Activated CD8-positive, alpha-beta memory T cell treated with anti-CD3 and anti-CD28 coated beads, Interleukin-2, amount 10 ng/mL, durations not matched to agents 7 days and 5 days (primary cell): ENCODE measurements at regions of chr2 and their contacts with region 1.

Region 1: GRCh38 chr2:38602732-38603401 is at the start of gene HNRNPLL:
- DNase-seq: peak; percentile 97
- ATAC-seq: peak; percentile 82
- H3K4me3 Mint-ChIP-seq: peak within 1 kb of the TSS; percentile 99
- H3K27ac Mint-ChIP-seq: peak within 1 kb of the TSS; percentile 95
- H3K4me1 Mint-ChIP-seq: peaks cover 49% of the 10 kb centered on the region
- H3K27me3 Mint-ChIP-seq: no peaks in the 10 kb centered on the region
- total RNA-seq, gene HNRNPLL: 88.8 to 106 TPM

Region 2: DNA sequence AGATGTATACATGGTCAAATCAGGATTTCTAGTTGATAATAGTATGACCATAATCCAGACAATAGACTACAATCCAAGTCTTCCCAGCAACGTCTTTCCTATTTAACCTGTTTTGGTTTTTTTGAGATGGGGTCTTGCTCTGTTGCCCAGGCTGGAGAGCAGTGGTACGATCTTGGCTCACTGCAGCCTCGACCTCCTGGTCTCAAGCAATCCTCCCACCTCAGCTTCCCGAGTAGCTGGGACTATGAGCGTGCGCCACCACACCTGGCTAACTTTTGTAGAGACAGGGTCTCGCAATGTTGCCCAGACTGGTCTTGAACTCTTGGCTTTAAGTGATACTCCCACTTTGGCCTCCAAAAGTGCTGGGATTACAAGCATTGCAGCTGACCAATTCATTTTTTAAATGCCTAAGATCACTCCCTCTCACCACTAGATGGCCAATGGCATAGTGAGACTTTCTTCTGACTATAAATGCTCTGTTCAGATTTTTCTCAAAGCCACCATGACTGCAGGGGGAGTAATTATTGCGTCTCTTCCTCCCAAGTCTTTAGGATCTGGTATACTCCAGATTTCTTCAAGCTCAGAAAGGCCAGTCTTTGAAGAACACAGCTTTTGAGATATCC is 47.8 kb before region 1 on chr2:
- CTCF ChIA-PET with region 1: no interaction called
- DNase-seq: no peak
- ATAC-seq: peak; percentile 42
- H3K4me3 Mint-ChIP-seq: no peak overlapping the region
- H3K27ac Mint-ChIP-seq: no peak overlapping the region
- H3K4me1 Mint-ChIP-seq: peaks cover 3% of the 10 kb centered on the region
- H3K27me3 Mint-ChIP-seq: no peaks in the 10 kb centered on the region

Region 3: DNA sequence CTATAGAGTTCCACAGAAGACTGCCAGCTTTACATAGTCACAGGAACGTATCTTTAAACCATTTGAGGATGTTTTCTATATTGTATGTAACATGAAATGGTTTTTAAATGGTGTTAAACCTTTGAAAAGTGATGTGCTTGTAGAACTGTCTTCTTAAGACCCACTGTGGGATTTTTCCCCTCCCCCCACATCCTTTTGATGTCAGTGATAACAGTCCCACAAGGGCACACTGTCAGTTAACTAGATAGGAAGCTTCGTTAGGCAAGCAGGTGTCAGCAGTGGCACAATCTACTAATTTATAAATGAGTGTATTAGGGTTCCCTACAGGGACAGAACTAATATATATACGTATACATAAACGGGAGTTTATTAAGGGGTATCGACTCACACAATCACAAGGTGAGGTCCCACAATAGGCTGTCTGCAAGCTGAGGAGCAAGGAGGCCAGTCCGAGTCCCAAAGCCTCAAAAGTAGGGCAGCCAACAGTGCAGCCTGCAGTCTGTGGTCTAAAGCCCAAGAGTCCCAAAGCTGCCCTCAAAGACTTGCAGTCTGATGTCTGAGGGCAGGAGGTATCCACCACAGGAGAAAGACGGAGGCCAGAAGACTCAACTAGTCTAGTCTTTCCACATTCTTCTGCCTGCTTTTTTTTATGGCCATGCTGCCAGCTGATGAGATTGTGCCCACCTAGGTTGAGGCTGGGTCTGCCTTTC is 23.6 kb after region 1 on chr2:
- CTCF ChIA-PET with region 1: interaction called, 23 read pairs
- DNase-seq: peak; percentile 78
- ATAC-seq: peak; percentile 82
- H3K4me3 Mint-ChIP-seq: no peak overlapping the region
- H3K27ac Mint-ChIP-seq: peak overlapping the region; percentile 30
- H3K4me1 Mint-ChIP-seq: peaks cover 27% of the 10 kb centered on the region
- H3K27me3 Mint-ChIP-seq: no peaks in the 10 kb centered on the region

Region 4: GRCh38 chr2:38665854-38666555 is 63.1 kb after region 1 on chr2 and contains the start of gene GALM:
- CTCF ChIA-PET with region 1: interaction called, 166 read pairs
- DNase-seq: peak; percentile 80
- ATAC-seq: peak; percentile 41
- H3K4me3 Mint-ChIP-seq: peak within 1 kb of the TSS; percentile 74
- H3K27ac Mint-ChIP-seq: peak within 1 kb of the TSS; percentile 96
- H3K4me1 Mint-ChIP-seq: peaks cover 64% of the 10 kb centered on the region
- H3K27me3 Mint-ChIP-seq: no peaks in the 10 kb centered on the region
- total RNA-seq, gene GALM: 67.1 to 86.0 TPM

Region 5: GRCh38 chr2:38685116-38685735 is 82.4 kb after region 1 on chr2:
- CTCF ChIA-PET with region 1: interaction called, 57 read pairs
- DNase-seq: no peak
- ATAC-seq: no peak
- H3K4me3 Mint-ChIP-seq: no peak overlapping the region
- H3K27ac Mint-ChIP-seq: peak overlapping the region; percentile 33
- H3K4me1 Mint-ChIP-seq: peaks cover 61% of the 10 kb centered on the region
- H3K27me3 Mint-ChIP-seq: no peaks in the 10 kb centered on the region

Region 6: DNA sequence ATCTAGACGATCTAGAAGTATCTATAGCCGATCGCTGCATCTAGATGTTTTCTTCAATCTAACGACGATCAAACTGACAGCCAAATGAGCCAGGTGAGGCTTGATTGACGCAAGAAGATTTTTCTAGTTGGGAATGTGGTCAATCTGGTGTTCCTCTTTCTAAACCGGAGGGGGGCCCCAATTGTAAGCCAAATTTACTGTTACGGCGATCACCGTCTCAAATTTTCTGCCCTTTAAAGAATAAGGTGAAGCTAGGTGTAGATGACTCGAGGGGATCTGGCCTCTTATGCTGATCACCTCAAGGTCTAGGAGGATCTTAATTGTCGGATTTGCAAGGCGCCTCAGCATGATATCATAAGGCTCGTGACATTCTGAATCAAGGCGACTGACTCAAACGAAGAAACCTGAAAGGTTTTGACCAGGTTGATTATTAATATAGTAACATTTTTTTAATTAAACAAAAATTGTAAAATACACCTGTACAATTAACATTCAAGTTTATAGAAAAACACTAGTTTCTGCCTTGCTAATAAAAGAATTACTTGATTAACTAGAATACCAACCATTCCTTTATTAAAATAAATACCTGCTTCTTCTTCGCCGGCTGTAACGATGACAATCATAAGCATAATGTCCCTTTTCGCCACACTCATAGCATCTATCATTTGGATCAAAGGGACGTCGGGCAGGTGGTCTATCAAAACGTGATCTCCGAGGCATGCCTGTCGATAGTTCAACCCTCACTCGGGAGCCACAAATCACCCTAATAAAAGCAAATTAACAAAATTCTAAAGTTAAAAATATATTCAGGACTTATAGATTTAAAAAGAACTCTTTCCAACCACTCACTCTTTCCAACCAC is 146.3 kb after region 1 on chr2:
- CTCF ChIA-PET with region 1: interaction called, 28 read pairs
- DNase-seq: peak; percentile 52
- ATAC-seq: no peak
- H3K4me3 Mint-ChIP-seq: peak overlapping the region; percentile 94
- H3K27ac Mint-ChIP-seq: peak overlapping the region; percentile 100
- H3K4me1 Mint-ChIP-seq: peaks cover 65% of the 10 kb centered on the region
- H3K27me3 Mint-ChIP-seq: peaks cover 3% of the 10 kb centered on the region

Region 7: DNA sequence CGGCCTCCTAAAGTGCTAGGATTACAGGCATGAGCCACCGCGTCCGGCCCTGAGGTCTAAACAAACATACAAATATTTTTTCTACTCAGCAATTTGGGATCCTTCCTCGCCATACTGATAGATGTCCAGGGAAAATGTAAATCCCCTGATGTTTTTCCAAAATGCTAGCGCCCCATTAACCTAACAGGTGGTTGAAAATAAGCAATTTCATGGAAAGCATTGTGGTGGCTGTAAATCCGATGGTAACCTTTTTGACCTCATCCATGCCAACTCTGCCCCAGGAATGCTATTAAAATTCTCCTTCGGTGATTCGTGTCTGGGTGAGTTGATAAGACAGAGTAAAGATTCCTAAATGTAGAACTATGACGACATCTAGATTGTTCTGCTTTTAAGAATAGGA is 194.4 kb after region 1 on chr2:
- CTCF ChIA-PET with region 1: no interaction called
- DNase-seq: no peak
- ATAC-seq: no peak
- H3K4me3 Mint-ChIP-seq: no peak overlapping the region
- H3K27ac Mint-ChIP-seq: no peak overlapping the region
- H3K4me1 Mint-ChIP-seq: no peaks in the 10 kb centered on the region
- H3K27me3 Mint-ChIP-seq: no peaks in the 10 kb centered on the region